PC-9 (cell line): ENCODE measurements at regions of chr4 and their contacts with region 1.

Region 1: GRCh38 chr4:78056265-78057129 is 626 bp upstream of the FRAS1 start:
- DNase-seq: peak; percentile 64 to 78
- H3K4me3 ChIP-seq: peak overlapping the region; percentile 88
- H3K27ac ChIP-seq: no peak overlapping the region
- H3K4me1 ChIP-seq: no peaks in the 10 kb centered on the region
- H3K27me3 ChIP-seq: no peaks in the 10 kb centered on the region
- CTCF ChIP-seq: no peak

Region 2: GRCh38 chr4:78293821-78294301 is 237.4 kb after region 1 on chr4:
- CTCF ChIA-PET with region 1: interaction called, 15 read pairs
- POLR2A ChIA-PET with region 1: interaction called, 4 read pairs
- intact Hi-C with region 1: loop called (anchors 1 kb)
- DNase-seq: peak; percentile 63 to 67
- H3K4me3 ChIP-seq: no peak overlapping the region
- H3K27ac ChIP-seq: peak overlapping the region; percentile 58
- H3K4me1 ChIP-seq: peaks cover 30% of the 10 kb centered on the region
- H3K27me3 ChIP-seq: no peaks in the 10 kb centered on the region
- CTCF ChIP-seq: no peak

Region 3: DNA sequence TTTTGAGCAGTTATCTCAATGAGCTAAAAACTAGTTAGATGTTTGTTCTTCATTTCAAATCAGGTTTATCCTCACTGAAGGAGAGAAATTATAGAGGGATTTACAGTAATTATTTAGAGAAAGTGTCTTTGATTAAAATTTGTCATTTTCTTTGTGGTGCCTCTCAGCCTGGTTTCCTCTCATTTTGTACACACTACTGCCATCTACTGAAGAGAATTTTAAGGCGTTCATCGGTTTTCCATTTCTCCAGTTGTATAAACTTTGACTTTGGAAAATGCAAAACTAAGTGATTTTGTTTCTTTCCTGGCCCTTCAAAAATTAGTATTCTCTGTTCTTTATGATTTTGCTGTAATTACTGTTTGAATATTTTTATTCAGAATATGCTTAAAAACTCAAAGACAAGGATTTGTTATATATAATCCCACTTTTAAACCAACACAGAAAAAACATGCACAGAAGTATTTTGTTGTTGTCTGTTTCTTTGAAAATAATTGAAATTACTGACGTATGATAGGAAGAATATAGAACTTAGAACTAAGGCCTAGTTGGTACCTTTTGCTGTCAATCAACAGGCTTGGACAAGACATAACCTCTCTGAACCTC is 460.7 kb after region 1 on chr4:
- CTCF ChIA-PET with region 1: no interaction called
- POLR2A ChIA-PET with region 1: no interaction called
- intact Hi-C with region 1: loop called (anchors 1 kb)
- DNase-seq: no peak
- H3K4me3 ChIP-seq: no peak overlapping the region
- H3K27ac ChIP-seq: no peak overlapping the region
- H3K4me1 ChIP-seq: no peaks in the 10 kb centered on the region
- H3K27me3 ChIP-seq: no peaks in the 10 kb centered on the region
- CTCF ChIP-seq: peak; percentile 69

Region 4: GRCh38 chr4:78551479-78552351 is 495.2 kb after region 1 on chr4 and contains the start of gene ANXA3:
- CTCF ChIA-PET with region 1: interaction called, 4 read pairs
- POLR2A ChIA-PET with region 1: no interaction called
- intact Hi-C with region 1: loop called (anchors 1 kb)
- DNase-seq: peak; percentile 51 to 72
- H3K4me3 ChIP-seq: peak within 1 kb of the TSS; percentile 88
- H3K27ac ChIP-seq: peak within 1 kb of the TSS; percentile 99
- H3K4me1 ChIP-seq: peaks cover 47% of the 10 kb centered on the region
- H3K27me3 ChIP-seq: no peaks in the 10 kb centered on the region
- CTCF ChIP-seq: no peak
- total RNA-seq, gene ANXA3: 139 and 140 TPM in 2 replicates

Region 5: GRCh38 chr4:78870056-78870455 is 813.6 kb after region 1 on chr4:
- CTCF ChIA-PET with region 1: no interaction called
- POLR2A ChIA-PET with region 1: no interaction called
- intact Hi-C with region 1: no loop called
- DNase-seq: no peak
- H3K4me3 ChIP-seq: no peak overlapping the region
- H3K27ac ChIP-seq: no peak overlapping the region
- H3K4me1 ChIP-seq: no peaks in the 10 kb centered on the region
- H3K27me3 ChIP-seq: no peaks in the 10 kb centered on the region
- CTCF ChIP-seq: no peak

Region 6: GRCh38 chr4:78990938-78991810 is 934.7 kb after region 1 on chr4:
- CTCF ChIA-PET with region 1: no interaction called
- POLR2A ChIA-PET with region 1: interaction called, 11 read pairs
- intact Hi-C with region 1: no loop called
- DNase-seq: no peak
- H3K4me3 ChIP-seq: no peak overlapping the region
- H3K27ac ChIP-seq: no peak overlapping the region
- H3K4me1 ChIP-seq: no peaks in the 10 kb centered on the region
- H3K27me3 ChIP-seq: no peaks in the 10 kb centered on the region
- CTCF ChIP-seq: no peak